ENCODE measurements at regions of chr19 and their contacts with region 1.

Region 1: DNA sequence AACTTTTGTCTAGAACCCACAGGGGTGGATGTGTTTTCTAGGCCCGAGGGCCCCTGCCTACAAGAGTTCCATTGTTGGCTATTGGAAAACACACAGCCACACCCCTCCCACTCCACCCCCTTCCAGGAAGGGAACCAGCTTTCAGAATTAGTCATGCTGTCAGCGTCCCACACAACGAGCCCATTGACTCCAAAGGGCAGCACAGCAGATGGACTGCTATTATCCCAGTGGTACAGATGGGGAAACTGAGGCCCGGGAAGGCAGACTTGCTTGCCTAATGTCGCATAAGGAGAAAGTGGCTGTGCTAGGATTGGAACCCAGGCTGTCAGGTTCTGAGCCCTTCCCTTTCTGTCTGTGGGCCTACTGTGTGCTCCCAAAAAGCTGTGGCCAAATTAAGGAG is 8.1 kb upstream of the FXYD3 start:
- DNase-seq: peak; percentile 86
- H3K4me3 Mint-ChIP-seq: peak overlapping the region; percentile 37
- H3K27ac Mint-ChIP-seq: peak overlapping the region; percentile 71
- H3K4me1 Mint-ChIP-seq: peaks cover 21% of the 10 kb centered on the region
- H3K27me3 Mint-ChIP-seq: no peaks in the 10 kb centered on the region
- CTCF ChIP-seq: no peak

Region 2: GRCh38 chr19:35124098-35125060 is 16.8 kb after region 1 on chr19:
- CTCF ChIA-PET with region 1: interaction called, 6 read pairs
- POLR2A ChIA-PET with region 1: interaction called, 10 read pairs
- intact Hi-C with region 1: no loop called
- DNase-seq: peak; percentile 97
- H3K4me3 Mint-ChIP-seq: peak overlapping the region; percentile 89
- H3K27ac Mint-ChIP-seq: peak overlapping the region; percentile 73
- H3K4me1 Mint-ChIP-seq: peaks cover 50% of the 10 kb centered on the region
- H3K27me3 Mint-ChIP-seq: no peaks in the 10 kb centered on the region
- CTCF ChIP-seq: no peak

Measured in MCF 10A (cell line).